Heart right ventricle (tissue), 16 donors: ENCODE measurements at regions of chr17 and their contacts with region 1.

Region 1: DNA sequence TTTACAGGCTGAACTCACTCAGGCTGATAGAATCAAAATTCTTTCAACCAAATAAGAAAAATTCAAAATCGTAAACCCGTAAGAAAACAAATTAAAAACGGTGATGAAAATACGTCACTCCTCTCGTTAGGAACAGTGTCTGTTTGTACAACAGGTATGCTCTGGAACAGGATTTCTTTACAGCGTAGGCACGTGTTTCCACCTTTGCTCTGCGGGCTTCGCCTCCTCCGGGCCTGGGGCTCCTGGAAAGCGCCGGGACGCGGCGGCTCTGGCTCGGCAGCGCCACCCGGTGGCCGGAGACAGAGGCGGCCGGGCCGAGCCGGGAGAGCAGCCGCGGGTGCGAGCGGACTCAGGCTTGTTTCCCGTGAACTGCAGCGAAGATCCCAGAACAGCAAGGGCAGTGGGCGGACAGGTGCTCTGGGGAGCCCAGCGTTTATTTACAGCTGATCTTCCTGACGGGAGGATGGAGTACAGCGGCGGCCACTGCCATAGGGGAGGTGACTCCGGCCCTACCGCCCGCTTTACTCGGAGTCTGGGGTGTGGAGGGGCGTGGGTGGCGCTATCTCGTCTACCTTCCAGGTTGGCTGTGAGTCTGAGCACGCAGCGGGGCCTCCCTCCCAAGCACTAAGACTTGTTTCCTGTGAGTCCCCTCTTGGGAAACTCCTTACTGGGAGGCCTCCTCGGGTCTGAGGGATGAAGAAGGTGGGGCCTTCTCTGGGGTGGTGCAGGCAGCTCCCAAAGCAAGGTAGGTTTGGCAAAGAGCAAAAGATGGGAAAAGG is 40.5 kb upstream of the ATP2A3 start:
- DNase-seq: peak; percentile 41 to 62
- ATAC-seq: peak; percentile 52 to 83 (median 71)
- H3K4me3 ChIP-seq: no peak overlapping the region
- H3K27ac ChIP-seq: peak overlapping the region in 1 of 10 donors; percentile 66
- H3K4me1 ChIP-seq: peaks cover 0 to 36% (median 19%) of the 10 kb centered on the region in 9 donors
- H3K27me3 ChIP-seq: peaks cover 0 to 7% (median 0%) of the 10 kb centered on the region in 7 donors
- CTCF ChIP-seq: peak; percentile 86 to 99 (median 95)

Region 2: DNA sequence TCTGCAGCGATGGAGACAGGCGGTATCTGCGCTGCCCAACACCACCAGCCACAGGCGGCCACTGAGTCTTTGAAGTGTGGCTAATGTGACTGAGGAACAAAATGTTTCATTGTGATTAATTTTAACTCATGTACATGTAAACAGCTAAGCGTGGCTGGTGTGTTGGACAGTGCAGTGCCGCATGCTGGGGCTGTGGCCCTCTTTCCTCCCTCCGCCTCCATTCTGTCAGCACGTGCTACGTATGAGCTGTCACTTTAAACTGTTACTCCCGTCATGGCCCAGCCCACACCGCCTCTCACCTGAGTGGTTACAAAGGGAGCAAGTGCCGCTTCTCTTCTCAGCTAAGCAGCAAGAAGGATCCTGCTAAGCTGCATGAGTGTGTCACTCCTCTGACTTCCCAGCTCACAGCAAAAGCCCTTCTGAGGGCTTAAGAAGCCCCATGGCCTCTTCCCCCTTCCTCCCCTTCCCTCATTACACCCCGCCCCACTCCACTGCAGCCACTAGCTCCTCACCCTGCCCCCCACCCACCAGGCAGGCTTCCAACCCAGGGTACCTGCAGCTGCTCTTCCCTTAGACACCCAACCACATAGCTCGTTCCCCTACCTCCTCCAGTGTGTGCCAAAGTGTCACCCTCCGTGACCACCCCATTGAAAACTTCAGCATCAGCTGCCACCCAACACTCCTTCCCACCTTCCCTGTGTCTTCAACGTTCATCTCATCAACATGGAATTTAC is 266.0 kb before region 1 on chr17:
- intact Hi-C with region 1: loop called in 3 of 10 experiments (anchors 2 to 10 kb)
- DNase-seq: no peak
- ATAC-seq: peak in 7 of 8 donors; percentile 28 to 69 (median 50)
- H3K4me3 ChIP-seq: peak overlapping the region in 3 of 10 donors; percentile 32 to 39 (median 32)
- H3K27ac ChIP-seq: peak overlapping the region in 2 of 10 donors; percentile 20 to 48
- H3K4me1 ChIP-seq: peaks cover 0 to 17% (median 7%) of the 10 kb centered on the region in 9 donors
- H3K27me3 ChIP-seq: peaks cover 0 to 10% (median 0%) of the 10 kb centered on the region in 7 donors
- CTCF ChIP-seq: no peak

Region 3: DNA sequence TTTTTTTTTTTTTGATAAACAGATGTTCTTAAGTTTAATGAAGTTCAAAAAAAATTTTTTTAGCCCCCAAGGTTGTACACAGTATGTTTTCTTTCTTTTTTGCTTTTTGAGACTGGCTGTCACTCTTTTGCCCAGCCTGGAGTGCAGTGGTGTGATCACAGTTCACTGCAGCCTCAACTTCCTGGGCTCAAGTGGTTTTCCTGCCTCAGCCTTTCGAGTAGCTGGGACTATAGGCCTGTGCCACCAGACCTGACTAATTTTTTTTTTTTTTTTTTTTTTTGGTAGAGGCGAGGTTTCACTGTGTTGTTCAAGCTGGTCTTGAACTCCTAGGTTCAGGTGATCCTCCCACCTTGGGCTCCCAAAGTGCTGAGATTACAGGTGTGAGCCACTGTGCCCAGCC is 216.5 kb before region 1 on chr17:
- intact Hi-C with region 1: no loop called
- DNase-seq: no peak
- ATAC-seq: no peak
- H3K4me3 ChIP-seq: no peak overlapping the region
- H3K27ac ChIP-seq: no peak overlapping the region
- H3K4me1 ChIP-seq: no peaks in the 10 kb centered on the region
- H3K27me3 ChIP-seq: no peaks in the 10 kb centered on the region
- CTCF ChIP-seq: no peak

Region 4: DNA sequence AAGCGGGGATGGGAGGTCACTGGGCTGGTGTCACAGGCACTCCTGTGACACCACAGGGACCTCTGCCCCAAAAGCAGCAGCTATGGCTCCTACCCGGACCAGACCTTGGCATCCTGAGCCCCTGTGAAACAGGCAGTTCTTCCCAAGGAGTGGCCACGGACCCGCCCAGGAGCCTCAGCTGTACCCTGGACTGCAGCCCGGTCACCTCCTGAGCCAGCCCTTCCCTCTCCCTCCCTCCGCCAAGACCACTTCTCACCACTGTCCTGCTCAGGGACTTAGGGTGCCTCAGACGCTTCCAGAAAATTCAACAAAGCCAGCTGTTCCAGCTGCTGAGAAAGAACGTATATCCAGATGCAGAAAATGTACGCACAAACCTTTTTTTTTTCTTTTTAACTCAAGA is 144.8 kb before region 1 on chr17:
- intact Hi-C with region 1: loop called in 8 of 10 experiments (anchors 5 to 10 kb)
- DNase-seq: no peak
- ATAC-seq: no peak
- H3K4me3 ChIP-seq: no peak overlapping the region
- H3K27ac ChIP-seq: no peak overlapping the region
- H3K4me1 ChIP-seq: peaks cover 0 to 1% (median 0%) of the 10 kb centered on the region in 9 donors
- H3K27me3 ChIP-seq: no peaks in the 10 kb centered on the region
- CTCF ChIP-seq: no peak

Region 5: DNA sequence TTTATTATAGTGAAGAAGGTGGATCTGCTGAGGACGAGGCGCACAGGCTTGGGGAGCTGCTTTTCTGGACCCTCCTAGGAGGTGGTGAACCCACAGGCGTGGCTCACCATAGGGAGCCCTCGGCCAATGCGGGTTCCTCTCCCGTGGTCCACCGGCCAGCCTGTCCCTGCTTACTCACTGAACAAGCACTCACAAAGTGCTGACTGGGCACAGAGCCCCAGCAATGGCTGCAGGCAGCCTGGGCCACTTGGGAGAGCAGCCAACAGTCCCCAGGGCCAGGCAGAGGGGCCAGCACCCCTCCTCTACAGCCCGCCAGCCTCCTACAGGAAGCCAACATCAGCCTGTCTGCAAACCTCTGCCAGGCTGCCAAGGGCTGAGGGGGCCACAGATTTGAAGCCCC is 139.5 kb before region 1 on chr17:
- intact Hi-C with region 1: loop called in 8 of 10 experiments (anchors 5 to 10 kb)
- DNase-seq: no peak
- ATAC-seq: peak in 4 of 8 donors; percentile 37 to 68 (median 62)
- H3K4me3 ChIP-seq: no peak overlapping the region
- H3K27ac ChIP-seq: no peak overlapping the region
- H3K4me1 ChIP-seq: peaks cover 0 to 8% (median 0%) of the 10 kb centered on the region in 9 donors
- H3K27me3 ChIP-seq: no peaks in the 10 kb centered on the region
- CTCF ChIP-seq: no peak

Region 6: GRCh38 chr17:3913531-3914311 is 91.0 kb before region 1 on chr17:
- intact Hi-C with region 1: loop called in 6 of 10 experiments (anchors 2 to 5 kb)
- DNase-seq: peak; percentile 79 to 86
- ATAC-seq: peak; percentile 57 to 78 (median 68)
- H3K4me3 ChIP-seq: peak overlapping the region in 1 of 10 donors; percentile 51
- H3K27ac ChIP-seq: peak overlapping the region in 3 of 10 donors; percentile 33 to 89 (median 41)
- H3K4me1 ChIP-seq: peaks cover 9 to 58% (median 36%) of the 10 kb centered on the region in 9 donors
- H3K27me3 ChIP-seq: no peaks in the 10 kb centered on the region
- CTCF ChIP-seq: peak; percentile 91 to 99 (median 98)

Region 7: DNA sequence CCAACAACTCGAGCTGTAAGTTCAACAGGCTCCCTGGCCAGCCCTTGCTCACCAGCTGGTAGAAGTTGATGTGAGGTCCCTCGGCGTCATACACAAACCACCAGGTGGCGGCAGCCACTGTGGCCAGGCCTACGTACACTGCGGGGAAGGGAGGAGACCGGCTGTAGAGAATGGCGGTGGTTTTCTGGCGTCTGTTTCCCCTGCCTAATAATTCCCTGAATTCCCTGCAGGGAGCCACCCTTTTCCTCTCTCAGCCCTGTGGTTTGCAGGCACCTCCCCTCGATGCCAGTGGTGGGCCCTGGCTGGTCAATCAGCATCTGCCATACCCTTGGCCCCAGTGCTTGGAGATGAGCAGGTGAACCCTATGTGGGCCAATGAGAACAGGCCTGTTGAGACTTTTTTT is 69.6 kb before region 1 on chr17:
- intact Hi-C with region 1: loop called (anchors 1 to 5 kb)
- DNase-seq: peak; percentile 71 to 73
- ATAC-seq: peak; percentile 91 to 98 (median 96)
- H3K4me3 ChIP-seq: no peak overlapping the region
- H3K27ac ChIP-seq: no peak overlapping the region
- H3K4me1 ChIP-seq: peaks cover 0 to 6% (median 0%) of the 10 kb centered on the region in 9 donors
- H3K27me3 ChIP-seq: no peaks in the 10 kb centered on the region
- CTCF ChIP-seq: peak; percentile 71 to 83 (median 78)

Region 8: DNA sequence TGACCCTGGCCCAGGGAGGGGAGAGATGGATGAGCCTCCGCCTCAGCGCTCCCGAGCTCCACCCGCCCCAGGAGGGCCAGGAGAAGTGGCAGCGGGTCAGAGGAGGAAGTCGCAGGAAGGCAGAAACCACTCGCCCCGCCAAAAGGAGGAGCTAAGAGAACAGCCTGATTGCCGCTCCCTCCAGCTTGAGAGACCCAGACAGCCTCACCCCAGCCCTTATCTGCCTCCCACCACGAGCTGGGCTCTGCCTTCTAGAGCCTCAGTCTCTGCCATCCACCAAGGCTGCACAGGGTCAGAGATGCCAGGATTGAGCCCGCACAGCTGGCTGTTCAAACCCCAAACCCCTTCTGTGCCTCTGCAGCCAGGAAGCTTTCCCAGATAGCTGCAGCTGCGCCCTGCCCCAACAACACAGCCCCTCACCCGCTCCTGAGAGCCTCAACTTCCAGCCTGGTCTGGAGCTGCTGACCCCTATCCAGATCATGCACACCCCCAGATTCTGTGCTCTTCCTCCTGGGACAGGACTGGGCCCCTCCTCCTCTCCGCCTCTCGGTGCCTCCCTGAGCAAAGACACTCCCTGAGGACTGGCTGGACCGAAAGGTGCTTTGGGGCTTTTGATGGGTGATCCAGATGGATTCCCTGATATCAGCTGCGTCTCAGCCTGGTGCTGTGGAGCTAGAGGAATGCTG is 39.4 kb before region 1 on chr17:
- intact Hi-C with region 1: loop called in 1 of 10 experiments (anchors 5 kb)
- DNase-seq: peak; percentile 58 to 60
- ATAC-seq: peak; percentile 40 to 78 (median 60)
- H3K4me3 ChIP-seq: peak overlapping the region in 9 of 10 donors; percentile 44 to 71 (median 57)
- H3K27ac ChIP-seq: peak overlapping the region; percentile 9 to 90 (median 57)
- H3K4me1 ChIP-seq: peaks cover 5 to 50% (median 32%) of the 10 kb centered on the region in 9 donors
- H3K27me3 ChIP-seq: peaks cover 3 to 38% (median 24%) of the 10 kb centered on the region in 7 donors
- CTCF ChIP-seq: peak in 1 of 9 donors; percentile 27